Ascending aorta (tissue), 2 donors: ENCODE measurements at regions of chr2 and their contacts with region 1.

Region 1: GRCh38 chr2:205680067-205680466 is 2.2 kb upstream of the NRP2 start:
- DNase-seq: peak in 1 of 2 donors; percentile 77
- H3K4me3 ChIP-seq: no peak overlapping the region
- H3K27ac ChIP-seq: no peak overlapping the region
- H3K4me1 ChIP-seq: peaks cover 0 to 10% of the 10 kb centered on the region in 2 donors
- H3K27me3 ChIP-seq: no peaks in the 10 kb centered on the region
- CTCF ChIP-seq: peak; percentile 50 to 68 (median 65)

Region 2: DNA sequence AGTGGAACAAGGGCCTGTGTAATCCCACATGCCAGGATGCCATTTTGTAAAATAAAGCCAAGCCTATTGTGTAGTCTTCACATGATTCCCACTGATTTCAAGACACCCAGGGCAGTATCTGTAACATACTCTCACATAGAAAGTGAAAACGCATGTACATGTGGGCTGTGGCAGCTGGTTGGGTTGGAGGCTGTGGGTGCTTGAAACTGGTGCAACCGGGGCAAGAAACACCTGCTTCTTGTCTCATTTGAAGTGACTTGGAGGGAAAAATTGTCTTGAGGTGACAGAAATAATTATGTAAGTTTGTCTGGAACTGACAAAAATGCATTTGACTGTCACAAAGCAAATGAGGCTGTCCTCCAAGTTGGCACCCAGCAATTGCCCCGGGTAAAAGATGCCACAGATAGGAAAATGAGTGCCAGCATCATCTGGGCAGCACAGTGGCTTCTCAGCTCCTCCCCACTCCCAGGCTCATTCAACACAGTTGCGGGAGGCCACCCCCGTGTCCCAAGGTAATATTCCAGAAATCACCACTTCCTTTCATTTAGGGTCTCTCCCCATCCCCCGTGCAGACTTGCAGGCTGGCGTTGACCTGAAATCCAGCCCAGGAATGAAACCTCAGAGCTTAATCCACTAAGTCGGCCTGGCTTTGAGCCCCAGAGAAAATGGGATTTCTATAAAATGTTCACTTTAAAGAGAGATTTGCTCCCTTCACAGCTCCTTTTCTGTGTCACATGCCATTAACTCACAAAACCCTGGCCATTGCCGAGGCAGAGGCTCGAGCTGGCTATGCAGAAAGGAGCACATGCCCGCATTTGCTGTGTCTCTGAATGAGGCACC is 1428.7 kb before region 1 on chr2:
- intact Hi-C with region 1: loop called (anchors 5 kb)
- DNase-seq: no peak
- H3K4me3 ChIP-seq: no peak overlapping the region
- H3K27ac ChIP-seq: no peak overlapping the region
- H3K4me1 ChIP-seq: peaks cover 0 to under 1% of the 10 kb centered on the region in 2 donors
- H3K27me3 ChIP-seq: no peaks in the 10 kb centered on the region
- CTCF ChIP-seq: no peak

Region 3: GRCh38 chr2:204325468-204325867 is 1354.6 kb before region 1 on chr2:
- intact Hi-C with region 1: loop called (anchors 5 kb)
- DNase-seq: peak in 1 of 2 donors; percentile 69
- H3K4me3 ChIP-seq: no peak overlapping the region
- H3K27ac ChIP-seq: no peak overlapping the region
- H3K4me1 ChIP-seq: peaks cover 0 to 2% of the 10 kb centered on the region in 2 donors
- H3K27me3 ChIP-seq: no peaks in the 10 kb centered on the region
- CTCF ChIP-seq: peak; percentile 73 to 84 (median 78)

Region 4: DNA sequence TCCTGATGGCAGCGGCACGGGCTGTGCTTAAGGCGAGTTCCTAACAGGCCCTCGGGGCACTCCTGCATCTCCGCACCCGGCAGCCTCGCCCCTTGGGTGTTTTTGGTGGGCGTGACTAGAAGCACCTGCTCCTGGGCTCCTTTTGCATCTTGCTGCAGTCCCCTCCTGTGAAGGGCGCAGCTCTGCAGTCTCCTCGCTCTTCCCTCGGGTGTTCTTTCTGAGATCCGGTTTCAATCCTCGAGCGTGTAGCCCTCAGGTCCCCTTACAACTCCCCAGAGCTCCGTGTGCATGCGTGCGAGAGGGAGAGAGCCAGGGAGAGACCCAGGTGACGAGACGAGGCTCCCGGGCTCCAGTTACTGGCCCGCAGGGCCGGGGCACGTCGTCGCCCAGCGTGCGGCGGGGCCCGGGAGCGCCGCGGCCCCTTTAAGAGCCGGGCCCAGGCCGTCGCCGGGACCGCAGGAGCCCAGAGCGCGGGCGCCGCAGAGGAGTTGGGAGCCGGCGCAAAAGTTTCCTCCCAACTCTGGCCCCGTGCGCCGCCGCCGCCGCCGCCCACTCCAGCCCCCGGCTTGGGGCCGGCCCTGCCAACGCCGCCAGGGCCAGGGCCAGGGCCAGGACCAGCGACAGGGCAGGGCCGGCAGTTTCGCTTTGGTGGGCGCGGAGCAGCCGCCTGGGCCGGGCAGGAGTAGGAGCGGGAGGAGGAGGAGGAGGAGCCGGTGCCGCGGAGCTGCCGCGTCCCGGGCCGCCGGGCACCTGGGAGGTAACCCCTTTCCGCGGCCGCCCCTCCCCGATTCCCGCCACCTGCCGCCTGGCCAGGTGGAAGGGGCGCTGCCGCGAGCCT is 1134.8 kb before region 1 on chr2 and contains the start of gene PARD3B:
- intact Hi-C with region 1: loop called (anchors 10 kb)
- DNase-seq: peak in 1 of 2 donors; percentile 70
- H3K4me3 ChIP-seq: peak within 1 kb of the TSS; percentile 99
- H3K27ac ChIP-seq: peak within 1 kb of the TSS; percentile 91
- H3K4me1 ChIP-seq: peaks cover 0 to 9% of the 10 kb centered on the region in 2 donors
- H3K27me3 ChIP-seq: no peaks in the 10 kb centered on the region
- CTCF ChIP-seq: no peak
- total RNA-seq, gene PARD3B: 9.5 TPM

Region 5: DNA sequence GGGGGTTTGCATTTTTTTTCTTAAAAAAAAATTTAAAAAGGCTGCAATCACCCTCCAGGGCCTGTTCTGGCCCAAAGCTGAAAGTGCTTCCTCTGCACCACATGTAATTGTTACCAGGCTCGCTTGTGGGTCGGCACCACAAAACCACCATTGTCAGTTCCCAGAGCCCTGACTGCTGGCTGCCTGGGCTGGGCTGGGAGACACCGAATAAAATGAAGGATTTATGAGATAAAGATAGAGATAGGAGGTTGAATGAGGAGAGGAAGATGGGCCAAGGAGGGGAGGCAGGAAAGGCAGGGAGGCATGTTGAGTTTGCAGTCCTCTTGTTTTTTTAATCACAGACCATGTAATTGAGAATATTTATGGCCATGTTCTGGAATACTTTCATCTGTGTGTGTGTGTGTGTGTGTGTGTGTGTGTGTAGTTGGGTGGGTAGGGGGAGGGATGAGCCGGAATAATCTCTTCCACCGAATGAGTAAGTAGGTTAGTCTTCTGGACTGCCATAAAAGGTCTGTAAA is 16.9 kb after region 1 on chr2:
- intact Hi-C with region 1: no loop called
- DNase-seq: no peak
- H3K4me3 ChIP-seq: no peak overlapping the region
- H3K27ac ChIP-seq: no peak overlapping the region
- H3K4me1 ChIP-seq: peaks cover 1 to 3% of the 10 kb centered on the region in 2 donors
- H3K27me3 ChIP-seq: no peaks in the 10 kb centered on the region
- CTCF ChIP-seq: no peak

Region 6: DNA sequence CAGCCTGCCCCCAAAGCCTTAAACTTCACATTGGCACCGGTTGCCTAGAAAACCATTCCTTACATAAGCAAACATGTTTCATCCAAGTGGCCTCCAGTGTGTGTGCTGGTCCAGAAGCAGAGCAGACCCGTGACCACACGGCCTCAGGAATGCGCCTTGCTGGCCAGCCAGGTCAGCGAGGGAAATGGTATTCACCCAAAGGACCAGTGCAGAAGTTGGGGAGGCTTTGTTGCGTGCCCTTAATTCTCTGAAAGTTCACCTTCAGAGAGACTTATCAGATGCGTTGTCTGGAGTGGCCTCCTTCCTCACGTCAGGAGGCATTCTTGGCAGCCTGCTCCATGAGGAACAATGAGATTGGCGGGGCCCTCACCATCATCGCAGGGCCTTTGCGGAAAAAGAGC is 28.2 kb after region 1 on chr2:
- intact Hi-C with region 1: loop called (anchors 2 kb)
- DNase-seq: peak in 1 of 2 donors; percentile 72
- H3K4me3 ChIP-seq: peak overlapping the region in 1 of 2 donors; percentile 13
- H3K27ac ChIP-seq: peak overlapping the region; percentile 57 to 66
- H3K4me1 ChIP-seq: peaks cover 12 to 35% of the 10 kb centered on the region in 2 donors
- H3K27me3 ChIP-seq: no peaks in the 10 kb centered on the region
- CTCF ChIP-seq: no peak